ENCODE measurements at regions of chr12 and their contacts with region 1.

Region 1: GRCh38 chr12:95820102-95820703 is 29.6 kb upstream of the NTN4 start:
- DNase-seq: peak; percentile 41
- H3K4me3 ChIP-seq: no peak overlapping the region
- H3K27ac ChIP-seq: no peak overlapping the region
- H3K4me1 ChIP-seq: peaks cover 0 to 3% (median 0%) of the 10 kb centered on the region in 4 donors
- H3K27me3 ChIP-seq: no peaks in the 10 kb centered on the region
- CTCF ChIP-seq: peak; percentile 38 to 66 (median 50)
- EP300 ChIP-seq: no peak
- POLR2A ChIP-seq: no peak

Region 2: GRCh38 chr12:95343461-95344230 is 476.6 kb before region 1 on chr12:
- in situ Hi-C with region 1: no loop called
- intact Hi-C with region 1: no loop called
- DNase-seq: no peak
- H3K4me3 ChIP-seq: no peak overlapping the region
- H3K27ac ChIP-seq: no peak overlapping the region
- H3K4me1 ChIP-seq: no peaks in the 10 kb centered on the region
- H3K27me3 ChIP-seq: no peaks in the 10 kb centered on the region
- CTCF ChIP-seq: no peak
- EP300 ChIP-seq: no peak
- POLR2A ChIP-seq: no peak

Region 3: GRCh38 chr12:95574799-95575452 is 245.3 kb before region 1 on chr12:
- in situ Hi-C with region 1: loop called in 1 of 4 experiments (anchors 25 kb)
- intact Hi-C with region 1: loop called (anchors 10 kb)
- DNase-seq: no peak
- H3K4me3 ChIP-seq: no peak overlapping the region
- H3K27ac ChIP-seq: no peak overlapping the region
- H3K4me1 ChIP-seq: no peaks in the 10 kb centered on the region
- H3K27me3 ChIP-seq: no peaks in the 10 kb centered on the region
- CTCF ChIP-seq: peak; percentile 52 to 68 (median 63)
- EP300 ChIP-seq: no peak
- POLR2A ChIP-seq: no peak

Region 4: GRCh38 chr12:95582230-95583058 is 237.8 kb before region 1 on chr12:
- in situ Hi-C with region 1: loop called in 1 of 4 experiments (anchors 25 kb)
- intact Hi-C with region 1: loop called (anchors 10 kb)
- DNase-seq: no peak
- H3K4me3 ChIP-seq: no peak overlapping the region
- H3K27ac ChIP-seq: no peak overlapping the region
- H3K4me1 ChIP-seq: no peaks in the 10 kb centered on the region
- H3K27me3 ChIP-seq: no peaks in the 10 kb centered on the region
- CTCF ChIP-seq: peak in 4 of 5 experiments; percentile 24 to 37 (median 34)
- EP300 ChIP-seq: no peak
- POLR2A ChIP-seq: no peak

Region 5: DNA sequence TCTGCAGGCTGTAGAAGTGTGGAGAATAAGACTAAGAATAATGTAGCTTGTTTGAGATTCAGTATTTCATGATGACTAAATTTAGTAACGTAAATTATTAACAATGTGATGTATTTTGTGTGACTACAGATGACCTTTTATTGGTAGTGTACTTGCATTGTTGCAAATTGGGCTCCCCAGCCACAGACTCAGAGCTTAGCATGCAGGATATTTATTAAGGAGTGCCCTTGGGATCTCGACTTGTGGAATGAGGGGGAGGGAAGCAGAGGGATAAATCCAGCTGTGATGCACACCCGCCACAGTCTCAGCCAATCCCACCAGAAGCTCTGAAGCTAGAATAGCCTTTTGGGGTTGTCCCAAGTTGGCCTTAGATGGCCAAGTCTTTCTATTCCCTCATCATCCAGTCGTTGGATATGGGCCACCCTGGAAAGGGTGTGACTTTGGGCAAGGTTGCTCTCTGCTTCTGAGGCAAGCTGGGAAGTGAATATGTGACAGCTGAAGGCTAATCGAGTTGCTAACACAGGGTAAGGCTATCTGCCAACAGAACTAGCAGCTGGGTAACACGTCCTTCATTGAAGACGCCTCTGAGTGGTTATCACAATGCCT is 226.8 kb before region 1 on chr12:
- in situ Hi-C with region 1: loop called in 2 of 4 experiments (anchors 10 to 25 kb)
- intact Hi-C with region 1: loop called (anchors 10 kb)
- DNase-seq: no peak
- H3K4me3 ChIP-seq: no peak overlapping the region
- H3K27ac ChIP-seq: no peak overlapping the region
- H3K4me1 ChIP-seq: no peaks in the 10 kb centered on the region
- H3K27me3 ChIP-seq: no peaks in the 10 kb centered on the region
- CTCF ChIP-seq: no peak
- EP300 ChIP-seq: no peak
- POLR2A ChIP-seq: no peak

Region 6: DNA sequence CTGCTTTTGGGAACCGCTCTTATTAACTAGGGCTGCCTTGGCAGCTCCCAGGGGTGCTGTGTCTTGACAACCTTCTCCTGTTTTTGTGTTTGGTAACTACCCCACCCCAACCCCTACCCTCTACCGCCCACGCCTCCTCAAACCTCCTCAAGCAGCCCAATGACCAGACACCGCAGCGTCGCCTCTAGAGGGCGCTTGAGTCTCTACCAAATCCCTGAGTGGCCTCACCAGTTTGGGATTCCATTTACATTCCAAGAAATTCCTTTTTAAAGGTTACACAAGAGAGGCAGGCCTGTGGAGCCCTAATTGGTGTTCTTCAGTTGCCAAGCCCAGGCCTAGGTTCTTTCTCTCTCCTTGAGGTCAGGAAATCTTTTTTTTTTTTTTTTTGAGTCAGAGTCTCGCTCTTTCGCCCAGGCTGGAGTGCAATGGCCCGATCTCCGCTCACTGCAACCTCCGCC is 196.6 kb before region 1 on chr12:
- in situ Hi-C with region 1: loop called in 1 of 4 experiments (anchors 10 kb)
- intact Hi-C with region 1: no loop called
- DNase-seq: peak; percentile 72
- H3K4me3 ChIP-seq: no peak overlapping the region
- H3K27ac ChIP-seq: peak overlapping the region in 1 of 4 donors; percentile 28
- H3K4me1 ChIP-seq: peaks cover 0 to 12% (median 5%) of the 10 kb centered on the region in 4 donors
- H3K27me3 ChIP-seq: no peaks in the 10 kb centered on the region
- CTCF ChIP-seq: peak; percentile 58 to 81 (median 67)
- EP300 ChIP-seq: no peak
- POLR2A ChIP-seq: no peak